ENCODE measurements at regions of chr21 and their contacts with region 1.

Region 1: DNA sequence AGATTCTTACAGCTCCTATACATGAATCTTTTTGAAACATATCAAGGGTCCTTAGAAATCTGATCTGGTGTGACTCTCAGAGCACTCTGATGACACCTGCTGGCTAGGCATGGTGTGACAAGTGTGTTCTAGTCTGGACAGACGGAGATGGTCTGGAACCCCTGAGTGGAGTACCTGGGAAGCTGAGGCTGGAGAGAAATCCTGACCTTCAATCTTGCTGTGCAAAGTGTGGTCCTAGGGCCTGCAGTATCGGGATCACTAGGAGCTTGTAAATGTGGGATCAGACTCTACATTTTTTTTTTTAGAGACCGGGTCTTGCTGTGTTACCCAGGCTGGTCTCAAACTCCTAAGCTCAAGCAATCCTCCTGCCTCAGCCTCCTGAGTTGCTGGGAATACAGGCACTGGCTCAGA is 78.6 kb upstream of the SOD1 start:
- DNase-seq: peak; percentile 72 to 91 (median 80)
- ATAC-seq: peak; percentile 75 to 84
- H3K4me3 ChIP-seq: no peak overlapping the region
- H3K27ac ChIP-seq: no peak overlapping the region
- H3K4me1 ChIP-seq: no peaks in the 10 kb centered on the region
- H3K27me3 ChIP-seq: no peaks in the 10 kb centered on the region

Region 2: GRCh38 chr21:31343680-31344480 is 237.0 kb before region 1 on chr21 and contains the start of gene TIAM1:
- intact Hi-C with region 1: loop called in 2 of 4 experiments (anchors 10 kb)
- DNase-seq: peak; percentile 71 to 91 (median 81)
- ATAC-seq: peak; percentile 95
- H3K4me3 ChIP-seq: peak within 1 kb of the TSS; percentile 40
- H3K27ac ChIP-seq: peak within 1 kb of the TSS; percentile 20
- H3K4me1 ChIP-seq: no peaks in the 10 kb centered on the region
- H3K27me3 ChIP-seq: no peaks in the 10 kb centered on the region
- total RNA-seq, gene TIAM1: 6.5 to 13.9 (median 9.0) TPM

Region 3: GRCh38 chr21:31725202-31725839 is 144.4 kb after region 1 on chr21:
- intact Hi-C with region 1: no loop called
- DNase-seq: no peak
- ATAC-seq: no peak
- H3K4me3 ChIP-seq: no peak overlapping the region
- H3K27ac ChIP-seq: no peak overlapping the region
- H3K4me1 ChIP-seq: peaks cover 3% of the 10 kb centered on the region
- H3K27me3 ChIP-seq: no peaks in the 10 kb centered on the region